Activated CD4-positive, alpha-beta T cell treated with anti-CD3 and anti-CD28 coated beads for 36 hours (primary cell): ENCODE measurements at regions of chr10 and their contacts with region 1.

Region 1: GRCh38 chr10:114937962-114938855 is at the start of gene TRUB1:
- DNase-seq: peak; percentile 95
- ATAC-seq: peak; percentile 100
- H3K4me3 Mint-ChIP-seq: peak within 1 kb of the TSS; percentile 96
- H3K27ac Mint-ChIP-seq: peak within 1 kb of the TSS; percentile 94
- H3K4me1 Mint-ChIP-seq: peaks cover 25% of the 10 kb centered on the region
- H3K27me3 Mint-ChIP-seq: no peaks in the 10 kb centered on the region
- total RNA-seq, gene TRUB1: 13.4 to 15.0 TPM

Region 2: GRCh38 chr10:113678690-113679462 is 1259.3 kb before region 1 on chr10:
- CTCF ChIA-PET with region 1: no interaction called
- POLR2A ChIA-PET with region 1: no interaction called
- intact Hi-C with region 1: loop called in 1 of 2 experiments (anchors 10 kb)
- DNase-seq: peak; percentile 84
- ATAC-seq: peak; percentile 16
- H3K4me3 Mint-ChIP-seq: peak overlapping the region; percentile 80
- H3K27ac Mint-ChIP-seq: peak overlapping the region; percentile 74
- H3K4me1 Mint-ChIP-seq: peaks cover 39% of the 10 kb centered on the region
- H3K27me3 Mint-ChIP-seq: peaks cover 5% of the 10 kb centered on the region

Region 3: GRCh38 chr10:113854011-113854760 is 1084.0 kb before region 1 on chr10 and contains the starts of genes DCLRE1A and NHLRC2:
- CTCF ChIA-PET with region 1: no interaction called
- POLR2A ChIA-PET with region 1: no interaction called
- intact Hi-C with region 1: loop called in 1 of 2 experiments (anchors 5 kb)
- DNase-seq: peak; percentile 77
- ATAC-seq: peak; percentile 51
- H3K4me3 Mint-ChIP-seq: peak within 1 kb of the TSS; percentile 80
- H3K27ac Mint-ChIP-seq: peak within 1 kb of the TSS; percentile 97
- H3K4me1 Mint-ChIP-seq: peaks cover 39% of the 10 kb centered on the region
- H3K27me3 Mint-ChIP-seq: no peaks in the 10 kb centered on the region
- total RNA-seq, gene DCLRE1A: 12.5 to 14.4 TPM
- total RNA-seq, gene NHLRC2: 20.1 to 22.3 TPM

Region 4: DNA sequence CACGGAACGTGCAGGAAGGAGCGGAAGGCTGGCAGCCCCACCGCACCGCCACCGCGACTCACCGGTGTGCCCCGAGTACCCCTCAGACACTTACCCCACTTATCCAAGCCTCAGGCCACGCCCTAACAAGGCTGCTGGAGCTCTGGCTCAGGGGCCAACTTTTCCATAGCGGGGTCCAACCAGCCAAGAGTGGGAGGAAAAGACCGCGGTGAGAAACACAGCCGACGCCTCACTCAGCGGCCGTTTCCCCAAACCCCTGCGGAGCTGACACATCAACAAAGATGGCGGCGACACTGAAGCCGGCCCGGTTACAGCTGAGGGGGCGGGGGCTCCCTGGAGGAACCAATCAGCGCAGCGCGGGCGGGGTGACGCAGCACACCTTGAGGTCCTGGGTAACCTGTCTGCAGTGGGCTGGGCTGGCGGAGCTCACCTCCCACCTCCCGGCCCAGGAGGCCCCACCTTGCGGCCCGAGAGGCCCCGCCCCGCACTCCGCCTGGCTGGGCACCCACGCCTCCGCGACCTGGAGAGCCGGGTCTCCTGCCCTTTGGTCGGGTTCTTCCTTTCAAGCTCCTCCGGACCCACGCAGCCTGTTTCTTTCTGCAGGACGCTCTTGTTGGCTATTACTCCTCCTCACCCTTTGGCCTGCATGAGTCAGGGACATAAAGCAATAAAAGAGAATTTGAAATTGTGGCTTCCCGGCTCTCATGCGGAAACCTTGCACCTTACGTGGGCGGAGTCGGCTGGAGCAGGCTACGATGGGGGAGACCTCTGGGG is 764.1 kb before region 1 on chr10 and contains the start of gene CCDC186:
- CTCF ChIA-PET with region 1: no interaction called
- POLR2A ChIA-PET with region 1: no interaction called
- intact Hi-C with region 1: loop called (anchors 2 to 5 kb)
- DNase-seq: peak; percentile 99
- ATAC-seq: peak; percentile 100
- H3K4me3 Mint-ChIP-seq: peak within 1 kb of the TSS; percentile 100
- H3K27ac Mint-ChIP-seq: peak within 1 kb of the TSS; percentile 99
- H3K4me1 Mint-ChIP-seq: peaks cover 32% of the 10 kb centered on the region
- H3K27me3 Mint-ChIP-seq: no peaks in the 10 kb centered on the region
- total RNA-seq, gene CCDC186: 9.1 to 13.9 TPM

Region 5: DNA sequence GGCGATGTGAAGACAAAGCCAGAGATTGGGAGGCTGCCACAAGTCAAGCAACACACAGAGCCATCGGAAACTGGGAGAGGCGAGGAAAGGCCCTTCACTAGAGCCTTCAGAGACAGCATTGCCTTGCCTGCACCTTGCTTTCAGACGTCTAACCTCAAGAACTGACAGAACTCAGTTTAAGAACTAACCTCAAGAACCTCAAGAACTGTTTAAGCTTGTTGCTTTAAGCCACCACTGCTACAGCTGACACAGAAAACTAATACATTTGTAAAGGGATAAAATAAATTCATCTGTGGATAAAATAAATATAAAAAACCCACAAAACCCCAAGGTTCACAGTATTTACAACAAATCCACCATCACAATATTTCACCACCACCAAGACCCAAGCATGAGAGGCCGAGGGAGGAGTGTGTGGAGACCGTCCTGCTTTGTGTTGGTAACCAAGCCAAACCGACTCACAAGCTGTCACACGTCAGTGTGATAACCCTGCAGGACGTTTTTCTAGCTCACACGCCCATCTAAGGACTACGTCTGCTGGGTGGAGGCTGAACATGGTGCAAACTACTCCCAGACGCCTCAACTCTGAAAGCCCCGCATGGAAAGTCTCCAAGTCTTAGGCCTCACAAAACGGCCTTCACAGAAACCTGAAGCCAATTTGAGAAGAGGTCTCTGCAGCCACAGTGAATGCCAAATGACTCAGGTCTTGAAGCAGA is 397.0 kb before region 1 on chr10:
- CTCF ChIA-PET with region 1: no interaction called
- POLR2A ChIA-PET with region 1: no interaction called
- intact Hi-C with region 1: loop called in 1 of 2 experiments (anchors 5 kb)
- DNase-seq: peak; percentile 85
- ATAC-seq: peak; percentile 84
- H3K4me3 Mint-ChIP-seq: peak overlapping the region; percentile 55
- H3K27ac Mint-ChIP-seq: peak overlapping the region; percentile 99
- H3K4me1 Mint-ChIP-seq: peaks cover 90% of the 10 kb centered on the region
- H3K27me3 Mint-ChIP-seq: no peaks in the 10 kb centered on the region

Region 6: GRCh38 chr10:114974625-114975024 is 36.4 kb after region 1 on chr10:
- CTCF ChIA-PET with region 1: no interaction called
- POLR2A ChIA-PET with region 1: no interaction called
- intact Hi-C with region 1: no loop called
- DNase-seq: no peak
- ATAC-seq: no peak
- H3K4me3 Mint-ChIP-seq: no peak overlapping the region
- H3K27ac Mint-ChIP-seq: no peak overlapping the region
- H3K4me1 Mint-ChIP-seq: peaks cover 7% of the 10 kb centered on the region
- H3K27me3 Mint-ChIP-seq: no peaks in the 10 kb centered on the region

Region 7: DNA sequence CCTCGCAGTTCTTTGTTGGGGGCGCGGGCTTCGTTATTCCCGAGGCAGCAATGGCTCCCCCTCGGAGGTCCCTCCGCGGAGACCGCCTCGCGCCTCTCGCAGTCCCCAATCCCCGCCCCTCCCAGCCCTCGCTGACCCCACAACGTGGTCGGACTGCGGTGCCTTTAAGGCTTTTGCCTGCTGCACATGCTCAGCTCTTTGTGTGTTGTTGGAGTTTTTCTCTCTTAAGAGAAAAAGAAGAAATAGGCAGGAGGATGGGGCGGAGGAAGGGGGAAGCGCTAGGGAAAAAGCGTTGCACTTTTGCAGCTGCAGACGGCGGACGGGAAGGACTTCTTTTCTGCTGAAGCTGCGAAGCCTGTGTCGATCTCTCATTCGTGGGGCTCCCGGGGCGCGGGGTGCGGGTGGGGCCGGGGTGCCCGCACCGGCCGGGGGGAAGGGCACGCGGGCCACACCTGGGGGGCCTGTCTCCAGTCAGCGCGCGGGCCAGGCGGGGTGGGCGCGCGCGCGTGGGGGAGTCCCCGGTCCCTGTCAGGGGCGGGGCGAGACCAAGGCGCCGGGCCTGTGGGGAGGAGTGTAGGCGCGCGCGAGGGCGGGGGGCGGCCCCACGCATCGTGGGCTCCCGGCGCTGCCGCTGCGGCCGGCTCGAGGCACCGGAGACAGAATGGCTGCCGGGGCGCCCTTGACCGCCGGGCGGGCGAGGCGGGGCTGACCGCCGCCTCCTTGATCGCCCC is 154.5 kb after region 1 on chr10:
- CTCF ChIA-PET with region 1: no interaction called
- POLR2A ChIA-PET with region 1: no interaction called
- intact Hi-C with region 1: loop called in 1 of 2 experiments (anchors 5 kb)
- DNase-seq: peak; percentile 43
- ATAC-seq: peak; percentile 70
- H3K4me3 Mint-ChIP-seq: peak overlapping the region; percentile 61
- H3K27ac Mint-ChIP-seq: peak overlapping the region; percentile 19
- H3K4me1 Mint-ChIP-seq: peaks cover 10% of the 10 kb centered on the region
- H3K27me3 Mint-ChIP-seq: peaks cover 37% of the 10 kb centered on the region

Region 8: GRCh38 chr10:116742367-116743265 is 1804.4 kb after region 1 on chr10 and contains the start of gene HSPA12A:
- CTCF ChIA-PET with region 1: no interaction called
- POLR2A ChIA-PET with region 1: no interaction called
- intact Hi-C with region 1: loop called in 1 of 2 experiments (anchors 5 kb)
- DNase-seq: peak; percentile 72
- ATAC-seq: peak; percentile 92
- H3K4me3 Mint-ChIP-seq: peak within 1 kb of the TSS; percentile 43
- H3K27ac Mint-ChIP-seq: no peak within 1 kb of the TSS
- H3K4me1 Mint-ChIP-seq: peaks cover 4% of the 10 kb centered on the region
- H3K27me3 Mint-ChIP-seq: peaks cover 53% of the 10 kb centered on the region
- total RNA-seq, gene HSPA12A: 0.41 to 0.74 TPM